Vagina (tissue), 2 donors: ENCODE measurements at regions of chr16 and their contacts with region 1.

Region 1: DNA sequence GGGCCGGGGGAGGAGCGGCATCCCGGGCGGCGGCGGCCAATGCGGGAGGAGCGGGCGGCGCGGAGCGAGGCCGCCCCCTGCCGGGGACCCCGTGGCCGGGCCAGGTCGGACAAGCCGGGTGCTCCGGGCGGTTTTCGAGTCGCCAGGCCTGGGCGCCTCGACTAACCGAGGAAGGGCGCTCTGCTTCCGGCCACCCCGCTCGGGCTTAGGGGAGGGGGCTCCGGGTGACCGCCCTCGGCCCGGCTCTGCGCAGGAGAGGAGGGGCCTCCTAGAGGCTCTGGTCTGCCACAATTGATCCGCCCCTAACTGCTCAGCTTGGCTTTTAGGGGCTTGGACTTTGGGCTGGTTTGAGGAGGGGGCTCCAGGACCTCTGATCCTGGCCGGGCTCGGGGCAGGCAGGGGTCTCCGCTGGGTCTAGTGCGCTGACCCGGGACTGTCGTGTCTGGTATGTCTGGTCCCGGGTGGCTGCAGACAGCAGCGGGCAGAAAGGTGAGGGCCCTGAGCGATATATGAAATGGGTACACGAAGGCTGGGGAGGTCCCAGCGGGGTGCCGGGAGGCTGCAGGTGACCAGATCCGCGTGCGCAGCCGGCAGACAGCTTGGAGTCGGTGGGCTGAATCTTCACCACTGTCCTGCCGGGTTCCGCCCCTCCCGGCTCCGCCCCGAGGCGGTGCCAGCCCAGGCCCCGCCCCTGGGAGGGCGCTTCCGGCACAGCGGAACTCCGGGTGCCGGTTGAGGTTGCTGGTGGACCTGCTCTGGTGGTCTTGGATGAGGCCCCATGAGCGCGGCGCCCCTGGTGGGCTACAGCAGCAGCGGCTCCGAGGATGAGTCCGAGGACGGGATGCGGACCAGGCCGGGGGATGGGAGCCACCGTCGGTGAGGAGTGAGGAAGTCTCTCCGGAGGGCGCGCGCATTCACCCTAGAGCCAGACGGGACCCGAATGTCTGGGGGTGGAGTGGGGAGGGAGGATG is at the start of gene USB1:
- DNase-seq: no peak
- H3K4me3 ChIP-seq: peak within 1 kb of the TSS; percentile 75 to 88
- H3K27ac ChIP-seq: peak within 1 kb of the TSS; percentile 78
- H3K4me1 ChIP-seq: peaks cover 34% of the 10 kb centered on the region
- H3K27me3 ChIP-seq: no peaks in the 10 kb centered on the region
- CTCF ChIP-seq: peak; percentile 49 to 66 (median 52)
- POLR2A ChIP-seq: peak in 1 of 2 donors; percentile 57
- total RNA-seq, gene USB1: 44.2 TPM

Region 2: GRCh38 chr16:57591086-57591869 is 409.7 kb before region 1 on chr16:
- intact Hi-C with region 1: loop called (anchors 10 kb)
- DNase-seq: peak; percentile 72 to 80
- H3K4me3 ChIP-seq: no peak overlapping the region
- H3K27ac ChIP-seq: no peak overlapping the region
- H3K4me1 ChIP-seq: peaks cover 10% of the 10 kb centered on the region
- H3K27me3 ChIP-seq: no peaks in the 10 kb centered on the region
- CTCF ChIP-seq: peak; percentile 69 to 85 (median 71)
- POLR2A ChIP-seq: no peak

Region 3: GRCh38 chr16:57899771-57900661 is 101.0 kb before region 1 on chr16:
- intact Hi-C with region 1: loop called (anchors 2 kb)
- DNase-seq: no peak
- H3K4me3 ChIP-seq: no peak overlapping the region
- H3K27ac ChIP-seq: no peak overlapping the region
- H3K4me1 ChIP-seq: no peaks in the 10 kb centered on the region
- H3K27me3 ChIP-seq: no peaks in the 10 kb centered on the region
- CTCF ChIP-seq: peak; percentile 66 to 77 (median 75)
- POLR2A ChIP-seq: no peak

Region 4: GRCh38 chr16:58098207-58099096 is 97.5 kb after region 1 on chr16:
- intact Hi-C with region 1: no loop called
- DNase-seq: no peak
- H3K4me3 ChIP-seq: no peak overlapping the region
- H3K27ac ChIP-seq: no peak overlapping the region
- H3K4me1 ChIP-seq: no peaks in the 10 kb centered on the region
- H3K27me3 ChIP-seq: no peaks in the 10 kb centered on the region
- CTCF ChIP-seq: no peak
- POLR2A ChIP-seq: no peak

Region 5: GRCh38 chr16:58481931-58482330 is 480.9 kb after region 1 on chr16:
- intact Hi-C with region 1: no loop called
- DNase-seq: no peak
- H3K4me3 ChIP-seq: no peak overlapping the region
- H3K27ac ChIP-seq: no peak overlapping the region
- H3K4me1 ChIP-seq: no peaks in the 10 kb centered on the region
- H3K27me3 ChIP-seq: no peaks in the 10 kb centered on the region
- CTCF ChIP-seq: no peak
- POLR2A ChIP-seq: no peak